Activated CD4-positive, alpha-beta T cell treated with anti-CD3 and anti-CD28 coated beads for 36 hours (primary cell): ENCODE measurements at regions of chr9 and their contacts with region 1.

Region 1: GRCh38 chr9:108761655-108762347 is 94.0 kb downstream of the ACTL7B start:
- DNase-seq: peak; percentile 64
- ATAC-seq: peak; percentile 58
- H3K4me3 Mint-ChIP-seq: no peak overlapping the region
- H3K27ac Mint-ChIP-seq: no peak overlapping the region
- H3K4me1 Mint-ChIP-seq: no peaks in the 10 kb centered on the region
- H3K27me3 Mint-ChIP-seq: peaks cover 2% of the 10 kb centered on the region

Region 2: GRCh38 chr9:107137495-107138202 is 1624.2 kb before region 1 on chr9:
- CTCF ChIA-PET with region 1: interaction called, 4 read pairs
- POLR2A ChIA-PET with region 1: no interaction called
- intact Hi-C with region 1: loop called in 1 of 2 experiments (anchors 5 kb)
- DNase-seq: peak; percentile 11
- ATAC-seq: no peak
- H3K4me3 Mint-ChIP-seq: no peak overlapping the region
- H3K27ac Mint-ChIP-seq: no peak overlapping the region
- H3K4me1 Mint-ChIP-seq: no peaks in the 10 kb centered on the region
- H3K27me3 Mint-ChIP-seq: peaks cover 12% of the 10 kb centered on the region

Region 3: DNA sequence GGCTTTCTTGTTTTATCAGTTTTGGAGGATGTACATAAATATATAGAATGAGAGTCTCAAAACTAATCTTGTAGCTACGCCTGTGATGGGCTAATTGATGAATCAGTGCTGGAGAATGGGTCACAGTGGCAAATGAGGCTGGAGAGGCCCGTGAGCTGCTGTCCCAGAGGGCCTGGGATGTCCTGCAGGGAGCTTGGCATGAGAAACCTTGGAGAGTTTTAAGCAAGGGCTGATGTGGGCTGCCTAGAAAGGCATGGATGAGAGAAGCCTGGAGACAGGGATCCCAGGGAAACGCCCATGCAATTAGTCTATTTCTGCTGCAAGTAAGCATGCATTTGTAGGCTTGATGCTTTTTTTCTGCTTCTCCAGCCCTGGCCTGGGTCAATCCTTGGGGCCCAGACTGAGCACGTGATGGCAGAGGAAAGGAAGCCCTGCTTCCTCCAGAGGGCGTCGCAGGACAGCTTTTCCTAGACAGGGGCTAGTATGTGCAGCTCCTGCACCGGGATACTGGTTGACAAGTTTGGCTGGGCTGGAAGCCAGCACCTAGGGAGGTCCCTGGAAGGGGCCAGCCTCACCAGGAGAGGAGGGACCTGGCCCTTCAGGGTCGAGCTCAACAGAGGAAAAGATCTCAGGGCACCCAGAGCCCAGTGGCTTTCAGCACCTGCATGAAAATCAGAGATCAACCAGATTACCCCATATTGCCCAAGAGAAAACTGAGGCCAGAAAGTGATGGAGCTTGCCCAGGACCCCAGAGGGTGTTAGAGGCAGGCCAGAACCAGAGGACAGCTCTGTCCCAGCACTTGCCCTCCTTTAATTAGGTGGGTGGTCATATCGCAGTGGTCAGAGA is 1339.6 kb before region 1 on chr9:
- CTCF ChIA-PET with region 1: interaction called, 6 read pairs
- POLR2A ChIA-PET with region 1: no interaction called
- intact Hi-C with region 1: loop called in 1 of 2 experiments (anchors 1 kb)
- DNase-seq: peak; percentile 70
- ATAC-seq: peak; percentile 55
- H3K4me3 Mint-ChIP-seq: no peak overlapping the region
- H3K27ac Mint-ChIP-seq: no peak overlapping the region
- H3K4me1 Mint-ChIP-seq: peaks cover 8% of the 10 kb centered on the region
- H3K27me3 Mint-ChIP-seq: peaks cover 16% of the 10 kb centered on the region

Region 4: GRCh38 chr9:107465467-107466451 is 1296.0 kb before region 1 on chr9:
- CTCF ChIA-PET with region 1: interaction called, 3 read pairs
- POLR2A ChIA-PET with region 1: no interaction called
- intact Hi-C with region 1: loop called in 1 of 2 experiments (anchors 5 kb)
- DNase-seq: peak; percentile 69
- ATAC-seq: peak; percentile 86
- H3K4me3 Mint-ChIP-seq: no peak overlapping the region
- H3K27ac Mint-ChIP-seq: no peak overlapping the region
- H3K4me1 Mint-ChIP-seq: peaks cover 3% of the 10 kb centered on the region
- H3K27me3 Mint-ChIP-seq: peaks cover 34% of the 10 kb centered on the region

Region 5: GRCh38 chr9:107484117-107484723 is 1277.6 kb before region 1 on chr9:
- CTCF ChIA-PET with region 1: no interaction called
- POLR2A ChIA-PET with region 1: no interaction called
- intact Hi-C with region 1: loop called in 1 of 2 experiments (anchors 5 kb)
- DNase-seq: peak; percentile 15
- ATAC-seq: peak; percentile 49
- H3K4me3 Mint-ChIP-seq: no peak overlapping the region
- H3K27ac Mint-ChIP-seq: no peak overlapping the region
- H3K4me1 Mint-ChIP-seq: peaks cover 7% of the 10 kb centered on the region
- H3K27me3 Mint-ChIP-seq: peaks cover 36% of the 10 kb centered on the region

Region 6: GRCh38 chr9:108468402-108468801 is 293.4 kb before region 1 on chr9:
- CTCF ChIA-PET with region 1: interaction called, 3 read pairs
- POLR2A ChIA-PET with region 1: no interaction called
- intact Hi-C with region 1: loop called in 1 of 2 experiments (anchors 1 kb)
- DNase-seq: peak; percentile 64
- ATAC-seq: no peak
- H3K4me3 Mint-ChIP-seq: no peak overlapping the region
- H3K27ac Mint-ChIP-seq: no peak overlapping the region
- H3K4me1 Mint-ChIP-seq: no peaks in the 10 kb centered on the region
- H3K27me3 Mint-ChIP-seq: no peaks in the 10 kb centered on the region

Region 7: DNA sequence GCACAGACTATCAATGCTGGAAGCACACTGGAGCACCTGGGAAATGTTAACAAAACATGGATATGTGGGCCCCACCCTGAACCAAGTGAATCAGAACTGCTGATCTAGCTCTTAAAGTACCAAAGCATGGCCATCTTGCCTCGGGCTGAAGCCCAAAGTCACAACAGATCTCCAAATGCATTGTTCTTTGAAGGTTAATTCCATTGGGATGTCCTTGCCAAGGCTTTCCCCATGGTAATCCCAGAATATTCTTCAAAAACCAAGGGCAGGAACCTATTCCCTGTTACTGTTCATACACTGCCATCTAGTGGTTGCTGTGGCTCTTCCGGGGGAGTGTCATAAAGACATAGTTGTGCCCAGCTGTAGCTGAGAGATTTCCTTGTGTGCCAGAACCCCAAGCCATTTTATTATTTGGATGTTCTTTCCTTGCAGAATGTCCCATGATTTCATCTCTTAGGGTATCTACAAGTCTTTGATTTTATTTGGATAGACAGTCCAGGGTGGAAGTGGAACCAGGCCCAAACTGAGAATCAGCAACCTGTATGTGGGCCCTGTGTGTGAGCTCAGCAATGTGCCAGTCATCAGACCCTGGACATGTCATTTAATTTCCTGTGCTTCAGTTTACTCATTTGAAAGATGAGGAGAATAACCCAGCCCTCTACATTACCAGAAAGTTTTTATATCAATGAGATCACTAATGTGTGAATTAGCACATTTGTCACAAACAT is 196.0 kb before region 1 on chr9:
- CTCF ChIA-PET with region 1: no interaction called
- POLR2A ChIA-PET with region 1: no interaction called
- intact Hi-C with region 1: loop called in 1 of 2 experiments (anchors 5 kb)
- DNase-seq: peak; percentile 38
- ATAC-seq: no peak
- H3K4me3 Mint-ChIP-seq: no peak overlapping the region
- H3K27ac Mint-ChIP-seq: no peak overlapping the region
- H3K4me1 Mint-ChIP-seq: no peaks in the 10 kb centered on the region
- H3K27me3 Mint-ChIP-seq: peaks cover 4% of the 10 kb centered on the region